Right cardiac atrium (tissue), 5 donors: ENCODE measurements at regions of chr11 and their contacts with region 1.

Region 1: DNA sequence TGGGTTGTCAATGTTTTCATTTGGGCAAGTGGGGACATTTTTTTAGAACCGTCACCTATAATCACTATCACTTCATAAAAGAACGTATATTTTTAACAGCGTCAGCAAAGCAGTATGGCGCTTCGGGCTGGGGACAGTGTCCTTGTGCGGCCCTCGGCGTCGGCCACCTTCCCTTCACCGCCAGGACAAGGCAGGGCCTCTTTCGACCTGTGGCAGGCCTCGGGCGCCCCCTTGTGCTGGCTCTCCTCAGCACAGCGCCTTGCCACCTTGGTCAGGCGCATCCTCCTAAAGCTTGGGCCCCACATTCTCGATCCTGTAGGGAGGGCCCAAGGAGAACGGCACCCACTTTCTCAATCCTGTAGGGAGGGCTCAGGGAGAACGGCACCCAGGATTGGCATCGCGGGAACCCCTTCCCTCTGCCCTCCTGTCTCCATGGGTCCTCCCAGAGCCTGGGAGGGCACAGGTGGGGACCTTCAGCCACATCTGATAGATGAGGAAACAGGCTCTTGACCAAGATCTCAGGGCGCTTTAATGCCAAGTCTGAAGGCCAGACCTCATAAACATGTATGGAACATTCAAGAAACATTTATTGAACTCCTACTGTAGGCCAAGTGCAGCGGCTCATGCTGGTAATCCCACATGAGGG is 11.5 kb upstream of the FADD start:
- DNase-seq: peak; percentile 81 to 94 (median 94)
- ATAC-seq: peak; percentile 90 to 91
- H3K4me3 ChIP-seq: no peak overlapping the region
- H3K27ac ChIP-seq: no peak overlapping the region
- H3K4me1 ChIP-seq: no peaks in the 10 kb centered on the region
- H3K27me3 ChIP-seq: no peaks in the 10 kb centered on the region

Region 2: DNA sequence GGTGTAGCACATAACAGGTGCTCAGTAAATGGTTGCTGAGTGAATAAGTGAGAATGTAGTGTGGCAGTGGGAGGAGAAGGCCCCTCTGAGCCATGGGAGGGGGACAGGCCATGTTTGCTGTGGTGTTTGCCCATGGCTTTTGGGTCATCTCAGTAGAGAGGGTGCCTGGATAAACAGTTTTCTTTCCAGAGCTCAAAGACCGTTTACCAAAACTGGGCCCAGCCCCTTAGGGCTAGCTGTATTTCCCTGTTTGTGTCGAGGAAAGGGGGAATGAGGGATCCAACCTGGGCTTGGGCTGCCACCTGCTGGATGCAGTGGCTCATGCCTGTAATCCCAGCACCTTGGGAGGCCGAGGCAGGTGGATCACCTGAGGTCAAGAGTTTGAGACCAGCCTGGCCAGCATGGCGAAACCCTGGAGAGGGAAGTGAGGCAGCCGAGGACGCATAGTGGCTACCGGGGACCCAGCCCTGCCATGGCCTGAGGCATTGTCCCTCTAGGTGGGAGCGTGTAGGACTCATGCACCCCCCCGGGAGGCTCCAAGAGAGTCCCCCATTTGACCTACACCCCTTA is 507.8 kb before region 1 on chr11:
- intact Hi-C with region 1: loop called (anchors 1 to 10 kb)
- DNase-seq: peak in 1 of 3 donors; percentile 31
- ATAC-seq: no peak
- H3K4me3 ChIP-seq: no peak overlapping the region
- H3K27ac ChIP-seq: no peak overlapping the region
- H3K4me1 ChIP-seq: no peaks in the 10 kb centered on the region
- H3K27me3 ChIP-seq: no peaks in the 10 kb centered on the region

Region 3: DNA sequence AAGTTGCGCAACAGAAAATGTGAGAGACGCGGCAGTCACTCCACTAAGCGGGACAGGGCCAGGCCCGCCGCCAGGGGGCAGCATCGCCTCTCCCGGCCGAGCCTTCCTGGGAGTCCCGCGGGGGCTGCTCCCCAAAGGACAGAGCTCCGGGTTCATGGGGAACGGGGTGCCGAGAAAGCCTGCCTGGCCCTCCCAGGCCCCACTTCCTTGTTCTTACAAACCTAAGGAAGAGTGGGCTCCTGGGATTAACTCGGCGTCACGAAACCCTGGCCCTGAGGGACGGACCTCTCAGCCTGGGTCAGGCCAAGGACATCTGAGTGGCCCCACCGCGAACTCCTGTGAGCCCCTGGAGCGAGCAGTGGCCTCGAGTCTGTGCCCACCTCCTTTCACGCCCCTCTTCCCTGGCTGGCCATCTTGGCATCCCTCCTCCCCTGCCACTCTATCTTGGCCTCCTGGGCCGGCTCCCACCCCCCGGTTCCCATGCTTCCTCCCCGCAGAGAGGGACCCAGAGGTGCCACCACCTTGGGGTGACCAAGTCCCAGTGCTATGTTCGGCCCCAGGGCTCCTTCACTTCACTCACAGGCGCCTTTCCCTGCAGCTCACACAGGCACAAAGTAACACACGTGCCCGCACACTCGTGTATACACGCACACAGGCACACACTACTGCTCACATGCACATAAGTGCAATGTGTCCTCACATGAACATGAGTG is 272.5 kb before region 1 on chr11:
- intact Hi-C with region 1: loop called (anchors 2 to 5 kb)
- DNase-seq: peak; percentile 87 to 94 (median 94)
- ATAC-seq: peak; percentile 76
- H3K4me3 ChIP-seq: no peak overlapping the region
- H3K27ac ChIP-seq: no peak overlapping the region
- H3K4me1 ChIP-seq: no peaks in the 10 kb centered on the region
- H3K27me3 ChIP-seq: no peaks in the 10 kb centered on the region

Region 4: DNA sequence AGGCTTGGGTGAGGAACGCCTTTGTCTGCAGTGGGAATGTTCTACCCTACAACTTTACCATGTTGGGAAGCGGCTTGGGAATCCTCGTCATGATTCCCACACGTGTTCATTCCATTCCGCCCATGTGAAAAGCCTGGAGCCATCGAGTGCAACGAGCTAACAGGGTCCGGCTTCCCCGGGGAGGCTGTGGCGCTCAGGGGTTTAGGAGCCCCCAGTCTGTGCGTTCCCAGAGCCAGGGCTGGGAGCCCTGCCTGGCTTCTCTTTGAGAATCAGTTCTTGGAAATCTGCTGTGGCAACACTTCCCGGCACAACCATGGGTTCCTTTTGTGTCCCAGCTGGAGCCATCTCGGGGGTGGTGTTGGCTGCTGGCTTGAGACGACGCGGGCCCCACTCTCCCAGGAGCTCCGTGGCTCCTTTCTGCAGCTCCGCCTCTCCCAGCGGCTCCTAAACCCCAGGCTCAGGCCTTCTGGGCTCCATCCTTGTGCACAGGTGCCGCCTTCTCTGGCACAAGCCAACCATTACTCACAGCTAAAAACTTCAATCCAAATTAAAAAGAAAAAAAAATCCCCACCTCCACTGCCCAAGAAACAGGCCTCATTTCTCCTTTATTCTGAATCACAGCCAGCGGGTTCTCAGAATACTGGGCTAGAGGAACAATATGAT is 60.2 kb after region 1 on chr11:
- intact Hi-C with region 1: no loop called
- DNase-seq: no peak
- ATAC-seq: peak; percentile 12 to 48
- H3K4me3 ChIP-seq: no peak overlapping the region
- H3K27ac ChIP-seq: no peak overlapping the region
- H3K4me1 ChIP-seq: no peaks in the 10 kb centered on the region
- H3K27me3 ChIP-seq: no peaks in the 10 kb centered on the region